AG04449 (cell line): ENCODE measurements at regions of chr12 and their contacts with region 1.

Region 1: GRCh38 chr12:52121824-52122539 is 42.5 kb downstream of the SMIM41 start:
- DNase-seq: no peak
- H3K4me3 ChIP-seq: no peak overlapping the region
- CTCF ChIP-seq: peak; percentile 84

Region 2: GRCh38 chr12:51449577-51450246 is 672.3 kb before region 1 on chr12:
- CTCF ChIA-PET with region 1: no interaction called
- POLR2A ChIA-PET with region 1: no interaction called
- DNase-seq: no peak
- H3K4me3 ChIP-seq: no peak overlapping the region
- CTCF ChIP-seq: no peak

Region 3: GRCh38 chr12:52004042-52004648 is 117.8 kb before region 1 on chr12:
- CTCF ChIA-PET with region 1: interaction called, 56 read pairs
- POLR2A ChIA-PET with region 1: no interaction called
- DNase-seq: no peak
- H3K4me3 ChIP-seq: no peak overlapping the region
- CTCF ChIP-seq: peak; percentile 79

Region 4: GRCh38 chr12:52032804-52033502 is 89.0 kb before region 1 on chr12:
- CTCF ChIA-PET with region 1: interaction called, 387 read pairs
- POLR2A ChIA-PET with region 1: no interaction called
- DNase-seq: peak; percentile 87
- H3K4me3 ChIP-seq: peak overlapping the region; percentile 53
- CTCF ChIP-seq: no peak

Region 5: DNA sequence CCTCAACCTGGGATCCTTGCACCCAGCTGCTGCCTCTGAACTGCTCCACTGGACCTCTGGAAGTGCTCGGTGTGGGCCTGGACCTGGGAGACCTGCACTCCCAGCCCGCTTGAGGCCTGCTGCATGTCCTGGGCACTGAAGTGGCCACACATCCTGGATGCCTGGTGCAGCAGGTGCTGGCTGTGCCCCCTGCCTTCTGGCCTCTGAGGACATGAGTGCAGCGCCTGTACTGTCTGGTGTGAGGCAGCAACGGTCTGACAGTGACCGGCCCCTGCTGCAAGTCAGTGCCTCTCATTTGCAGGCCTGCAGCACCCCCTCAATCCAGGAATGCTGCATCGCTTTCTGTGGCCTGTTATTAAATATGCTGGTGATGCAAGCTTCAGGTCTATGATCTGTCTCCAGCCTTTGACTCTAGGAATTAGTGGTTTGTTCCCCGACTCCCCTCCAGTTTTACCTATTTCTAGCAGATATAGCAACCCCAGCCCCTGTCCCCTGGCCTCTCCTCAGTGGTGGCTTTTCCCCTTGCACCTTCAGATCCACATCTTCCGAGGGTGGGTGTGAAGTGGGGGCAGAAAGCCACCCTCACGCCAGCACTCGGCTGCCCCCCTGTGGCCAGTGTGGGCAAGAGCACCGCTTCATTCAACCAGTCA is 38.9 kb before region 1 on chr12:
- CTCF ChIA-PET with region 1: interaction called, 26 read pairs
- POLR2A ChIA-PET with region 1: no interaction called
- DNase-seq: no peak
- H3K4me3 ChIP-seq: no peak overlapping the region
- CTCF ChIP-seq: peak; percentile 99

Region 6: DNA sequence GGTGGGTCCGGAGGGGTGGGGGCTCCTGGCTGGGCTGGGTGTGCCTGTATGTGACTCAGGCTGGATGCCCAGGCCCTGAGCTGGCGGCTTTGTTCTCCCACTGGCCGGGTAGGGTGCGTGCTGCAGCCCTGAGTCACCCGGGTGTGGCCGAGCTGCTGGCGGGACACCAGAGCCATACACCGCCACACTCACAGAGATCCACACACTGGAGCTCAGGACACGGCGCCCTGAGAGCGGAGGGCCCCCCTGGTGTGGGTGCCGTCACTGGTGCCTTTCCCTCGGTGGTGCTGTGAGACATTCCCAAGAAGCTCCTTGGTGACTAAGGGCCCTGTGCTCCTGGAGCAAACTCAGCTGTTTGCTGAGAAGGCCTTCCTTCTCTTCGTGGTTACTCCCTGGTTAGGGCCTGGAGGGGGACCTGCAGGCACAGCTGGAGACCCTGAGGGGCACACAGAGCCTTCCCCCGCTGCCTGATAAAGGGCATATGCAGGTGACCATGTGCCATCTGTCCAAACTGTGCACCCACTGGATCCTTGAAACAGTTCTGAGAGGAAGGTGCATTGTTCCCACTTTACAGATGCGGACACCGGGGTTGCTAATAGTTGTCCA is 25.5 kb after region 1 on chr12:
- CTCF ChIA-PET with region 1: interaction called, 23 read pairs
- POLR2A ChIA-PET with region 1: no interaction called
- DNase-seq: peak; percentile 92
- H3K4me3 ChIP-seq: no peak overlapping the region
- CTCF ChIP-seq: no peak